IMR-90 (cell line): ENCODE measurements at regions of chr2 and their contacts with region 1.

Region 1: DNA sequence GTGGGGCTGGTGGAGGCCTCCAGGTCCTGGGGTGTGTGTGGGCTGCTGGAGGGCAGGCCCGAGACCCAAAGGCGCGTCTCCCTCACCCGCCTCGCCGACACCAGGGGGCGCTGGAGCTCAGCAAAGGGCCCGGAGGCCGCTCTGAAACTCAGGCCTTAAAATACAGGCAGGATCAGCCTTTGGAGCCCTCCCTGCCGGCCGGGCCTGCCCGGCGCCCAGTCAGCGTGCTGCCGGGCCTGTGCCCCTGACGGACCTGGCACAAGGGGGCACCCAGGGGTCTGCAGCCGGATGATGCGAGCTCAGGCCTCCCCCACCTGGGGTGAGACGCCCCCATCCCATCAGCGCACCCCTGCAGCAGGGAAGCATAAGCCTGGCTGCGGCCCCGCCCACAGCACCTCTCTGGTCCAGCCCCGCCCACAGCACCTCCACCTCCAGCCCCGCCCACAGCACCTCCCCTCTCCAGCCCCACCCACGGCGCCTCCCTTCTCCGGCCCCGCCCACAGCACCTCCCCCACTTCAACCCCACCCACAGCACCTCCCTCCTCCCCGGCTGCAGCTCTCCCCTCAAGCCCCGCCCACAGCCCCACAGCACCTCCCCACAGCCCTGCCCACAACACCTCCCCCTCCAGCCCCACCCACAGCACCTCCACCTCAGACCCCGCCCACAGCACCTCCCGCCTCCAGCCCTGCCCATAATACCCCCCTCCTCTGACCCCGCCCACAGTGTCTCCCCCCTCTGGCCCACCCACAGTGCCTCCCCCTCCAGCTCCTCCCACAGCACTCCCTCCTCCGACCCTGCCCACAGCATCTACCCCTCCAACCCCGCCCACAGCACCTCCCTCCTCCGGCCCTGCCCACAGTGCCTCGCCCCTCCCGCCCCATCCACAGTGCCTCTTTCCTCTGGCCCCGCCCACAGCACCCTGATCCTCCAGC is 92.8 kb upstream of the OTOS start:
- DNase-seq: peak; percentile 71
- ATAC-seq: peak; percentile 88
- H3K4me3 ChIP-seq: peak overlapping the region; percentile 22; the same call in 1 of the 2 replicates
- H3K27ac ChIP-seq: no peak overlapping the region
- H3K4me1 ChIP-seq: peaks cover 12% of the 10 kb centered on the region
- H3K27me3 ChIP-seq: no peaks in the 10 kb centered on the region; the same call in 1 of the 2 replicates
- CTCF ChIP-seq: peak; percentile 94
- POLR2A ChIP-seq: 0 out of 2 replicates have a peak, but pooled peaks have one; percentile 48
- RAD21 ChIP-seq: peak; percentile 98

Region 2: GRCh38 chr2:240149943-240150784 is 83.1 kb before region 1 on chr2:
- CTCF ChIA-PET with region 1: no interaction called
- POLR2A ChIA-PET with region 1: no interaction called
- dilution Hi-C with region 1: no loop called
- in situ Hi-C with region 1: no loop called
- intact Hi-C with region 1: loop called (anchors 1 kb)
- DNase-seq: peak; percentile 22
- ATAC-seq: peak; percentile 93
- H3K4me3 ChIP-seq: no peak overlapping the region
- H3K27ac ChIP-seq: no peak overlapping the region
- H3K4me1 ChIP-seq: no peaks in the 10 kb centered on the region
- H3K27me3 ChIP-seq: peaks cover 36% of the 10 kb centered on the region
- CTCF ChIP-seq: peak; percentile 68
- POLR2A ChIP-seq: no peak
- RAD21 ChIP-seq: peak; percentile 75

Region 3: DNA sequence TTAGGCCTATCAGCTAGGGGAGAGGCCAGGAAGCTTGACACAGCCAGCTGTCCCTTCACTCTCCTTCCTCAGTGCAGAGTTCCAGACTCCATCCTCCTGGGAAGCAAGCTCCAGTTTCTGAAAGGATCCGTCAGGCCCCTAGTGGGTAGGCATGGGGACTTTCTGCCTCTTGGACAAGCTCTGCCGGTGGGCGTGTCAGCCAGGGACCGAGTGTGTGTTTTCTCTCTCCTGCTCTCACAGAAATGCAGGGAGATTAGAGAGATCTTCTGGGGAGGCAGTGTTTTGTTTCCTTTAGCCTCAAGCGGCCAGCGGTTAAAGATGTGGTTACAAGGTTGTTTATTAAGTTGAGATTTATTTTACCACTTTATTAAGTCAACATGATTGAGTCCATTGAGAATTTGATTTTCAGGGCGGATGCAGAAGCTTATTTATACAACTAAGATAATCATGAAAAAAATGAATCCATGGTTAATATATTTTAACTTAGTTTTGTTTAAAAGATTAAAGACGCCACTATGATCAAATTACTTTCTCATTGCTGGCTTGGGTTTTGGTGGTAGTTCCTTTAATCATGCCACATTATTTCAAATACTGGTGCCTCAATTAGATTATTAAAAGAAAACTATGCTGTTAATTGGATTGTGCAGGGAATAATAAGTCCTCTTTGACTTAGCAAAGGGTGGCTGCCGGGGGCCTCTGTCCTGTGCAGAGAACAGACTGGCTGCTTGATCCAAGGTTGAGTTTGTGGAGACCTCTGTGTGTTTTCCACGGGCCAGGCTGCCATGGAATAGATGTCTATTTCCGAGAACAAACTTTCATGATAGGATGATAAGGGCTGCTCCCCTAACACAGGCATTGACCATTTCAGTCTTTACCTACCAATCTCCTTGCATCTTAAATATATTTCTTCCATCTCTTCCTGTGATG is 62.6 kb before region 1 on chr2:
- CTCF ChIA-PET with region 1: no interaction called
- POLR2A ChIA-PET with region 1: no interaction called
- dilution Hi-C with region 1: no loop called
- in situ Hi-C with region 1: no loop called
- intact Hi-C with region 1: no loop called
- DNase-seq: peak; percentile 25
- ATAC-seq: peak; percentile 88
- H3K4me3 ChIP-seq: no peak overlapping the region
- H3K27ac ChIP-seq: no peak overlapping the region
- H3K4me1 ChIP-seq: peaks cover 3% of the 10 kb centered on the region; the same call in 1 of the 2 replicates
- H3K27me3 ChIP-seq: peaks cover 53% of the 10 kb centered on the region
- CTCF ChIP-seq: peak; percentile 25; the same call in 1 of the 2 replicates
- POLR2A ChIP-seq: no peak
- RAD21 ChIP-seq: no peak

Region 4: DNA sequence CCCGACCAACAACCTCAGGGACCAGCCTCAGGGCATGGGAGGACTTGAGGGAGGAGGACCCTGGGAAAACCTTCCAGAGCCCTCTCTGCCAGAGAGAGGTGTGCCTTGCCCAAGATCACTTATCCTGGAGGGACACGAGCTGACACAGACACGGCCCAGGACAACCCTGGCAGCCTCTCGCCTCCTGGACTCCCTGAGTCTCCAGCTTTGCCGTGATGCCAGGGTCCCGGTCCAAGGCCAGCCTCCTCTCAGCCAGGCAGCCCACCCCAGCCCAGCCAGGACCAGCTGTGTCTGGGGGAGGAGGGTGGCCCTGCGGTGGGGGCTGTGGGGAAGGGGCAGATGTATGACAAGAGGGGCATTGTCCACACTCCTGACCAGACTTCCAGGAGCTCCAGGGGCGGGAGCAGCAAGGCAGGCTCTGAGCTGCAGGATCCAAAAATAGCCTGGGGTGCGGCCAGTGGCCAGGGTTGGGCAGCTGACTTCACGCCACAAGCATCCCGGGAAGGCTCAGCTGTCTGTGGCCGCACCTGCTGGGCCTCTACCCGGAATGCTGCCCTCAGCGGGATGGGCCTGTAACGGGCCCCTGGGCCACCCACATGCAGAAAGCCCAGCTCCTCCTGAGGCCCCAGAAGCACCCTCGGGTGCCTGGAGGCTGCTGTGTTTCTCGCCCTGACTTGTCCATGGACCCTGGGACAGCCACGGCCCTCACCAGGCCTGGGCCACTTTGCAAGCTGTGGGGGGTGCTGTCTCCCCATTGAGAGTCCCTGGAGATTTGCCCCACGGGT is 136.8 kb after region 1 on chr2:
- CTCF ChIA-PET with region 1: no interaction called
- POLR2A ChIA-PET with region 1: no interaction called
- dilution Hi-C with region 1: no loop called
- in situ Hi-C with region 1: no loop called
- intact Hi-C with region 1: loop called (anchors 5 kb)
- DNase-seq: peak; percentile 93
- ATAC-seq: peak; percentile 72
- H3K4me3 ChIP-seq: no peak overlapping the region
- H3K27ac ChIP-seq: peak overlapping the region; percentile 82
- H3K4me1 ChIP-seq: peaks cover 31% of the 10 kb centered on the region
- H3K27me3 ChIP-seq: no peaks in the 10 kb centered on the region
- CTCF ChIP-seq: 0 out of 2 replicates have a peak, but pooled peaks have one; percentile 13
- POLR2A ChIP-seq: peak; percentile 28; the same call in 1 of the 2 replicates
- RAD21 ChIP-seq: no peak

Region 5: GRCh38 chr2:240566203-240567136 is 333.2 kb after region 1 on chr2:
- CTCF ChIA-PET with region 1: no interaction called
- POLR2A ChIA-PET with region 1: no interaction called
- dilution Hi-C with region 1: no loop called
- in situ Hi-C with region 1: no loop called
- intact Hi-C with region 1: loop called (anchors 5 kb)
- DNase-seq: peak; percentile 70
- ATAC-seq: peak; percentile 79
- H3K4me3 ChIP-seq: peak overlapping the region; percentile 31
- H3K27ac ChIP-seq: peak overlapping the region; percentile 72
- H3K4me1 ChIP-seq: peaks cover 36% of the 10 kb centered on the region
- H3K27me3 ChIP-seq: no peaks in the 10 kb centered on the region
- CTCF ChIP-seq: peak; percentile 66
- POLR2A ChIP-seq: no peak
- RAD21 ChIP-seq: peak; percentile 29; the same call in 1 of the 2 replicates